AG04449 (cell line): ENCODE measurements at regions of chr13 and their contacts with region 1.

Region 1: DNA sequence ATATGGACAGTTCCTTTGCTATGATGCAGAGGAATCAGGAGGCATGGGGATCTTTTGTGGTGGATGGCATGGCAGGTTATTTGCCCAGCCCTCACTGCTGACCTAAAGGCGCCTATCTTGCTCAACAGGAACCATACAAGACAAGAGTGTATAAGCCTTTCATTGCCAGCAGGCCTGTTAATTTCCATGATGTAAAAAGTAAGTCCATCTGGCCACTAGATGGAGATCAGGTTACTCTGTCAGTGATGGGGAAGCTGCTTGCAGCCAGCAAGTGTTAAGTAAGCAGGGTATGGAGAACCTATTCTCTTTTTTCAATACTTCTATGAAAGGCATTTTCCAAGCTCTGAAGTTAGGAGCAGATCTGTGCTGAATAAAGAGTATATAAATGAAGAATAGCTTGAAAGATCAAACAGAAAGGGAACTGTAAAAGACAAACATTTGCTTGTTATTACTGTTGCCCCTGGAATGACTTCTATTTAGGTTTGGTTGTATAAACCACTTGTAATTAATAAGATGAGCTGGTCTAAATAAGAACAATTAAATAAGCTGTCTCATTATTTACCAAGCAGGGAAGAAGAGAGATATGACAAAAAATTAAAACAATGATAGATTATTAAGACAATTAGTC is 210.9 kb downstream of the RGCC start:
- DNase-seq: peak; percentile 81
- H3K4me3 ChIP-seq: no peak overlapping the region
- CTCF ChIP-seq: peak; percentile 72

Region 2: DNA sequence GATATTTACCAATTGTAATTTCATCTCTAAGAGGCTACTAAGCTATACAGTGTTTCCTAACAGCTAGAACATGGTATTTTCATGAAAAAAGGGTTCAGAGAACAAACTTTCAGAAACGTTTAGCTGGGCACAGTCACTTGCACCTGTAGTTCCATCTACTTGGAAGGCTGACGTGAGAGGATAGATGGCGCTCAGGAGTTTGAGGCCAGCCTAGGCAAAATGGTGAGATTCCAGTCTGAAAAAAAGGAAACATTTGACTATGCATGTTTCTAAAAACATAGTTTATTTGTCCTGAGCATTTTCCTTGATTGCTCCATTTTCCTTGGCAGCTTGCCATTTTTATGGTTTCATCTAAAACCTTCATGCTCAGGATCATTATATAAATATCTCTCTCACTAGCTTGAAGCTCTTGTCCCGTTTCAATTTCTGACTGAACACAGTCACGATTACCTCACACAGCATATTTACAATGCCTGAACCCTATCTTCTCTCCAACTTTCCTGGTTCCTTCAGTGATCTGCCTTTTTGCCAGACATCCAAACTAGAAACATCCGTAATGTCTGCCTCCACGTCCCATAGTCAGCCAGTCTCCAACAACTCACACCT is 10.1 kb before region 1 on chr13:
- CTCF ChIA-PET with region 1: interaction called, 55 read pairs
- POLR2A ChIA-PET with region 1: no interaction called
- DNase-seq: no peak
- H3K4me3 ChIP-seq: no peak overlapping the region
- CTCF ChIP-seq: no peak

Region 3: DNA sequence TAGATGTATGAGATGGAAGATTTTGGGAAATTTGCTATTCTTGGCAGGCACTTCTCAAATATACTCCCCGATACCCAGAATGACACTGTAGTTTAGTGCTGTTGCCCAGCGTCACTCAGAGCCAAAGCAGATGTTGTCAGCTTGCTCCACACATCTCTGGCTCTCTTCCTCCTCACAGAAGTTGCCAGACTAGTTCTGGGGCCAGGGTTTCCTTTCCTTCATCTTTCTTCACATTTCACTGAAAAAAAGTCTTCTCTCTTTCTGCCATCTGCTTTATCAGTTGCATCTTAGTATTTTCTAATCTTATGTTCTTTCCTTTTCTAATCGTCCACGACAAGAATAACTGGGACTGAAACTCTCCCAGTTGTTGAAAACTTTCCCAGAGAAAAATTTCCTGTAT is 40.5 kb after region 1 on chr13:
- CTCF ChIA-PET with region 1: no interaction called
- POLR2A ChIA-PET with region 1: no interaction called
- DNase-seq: no peak
- H3K4me3 ChIP-seq: no peak overlapping the region
- CTCF ChIP-seq: no peak

Region 4: DNA sequence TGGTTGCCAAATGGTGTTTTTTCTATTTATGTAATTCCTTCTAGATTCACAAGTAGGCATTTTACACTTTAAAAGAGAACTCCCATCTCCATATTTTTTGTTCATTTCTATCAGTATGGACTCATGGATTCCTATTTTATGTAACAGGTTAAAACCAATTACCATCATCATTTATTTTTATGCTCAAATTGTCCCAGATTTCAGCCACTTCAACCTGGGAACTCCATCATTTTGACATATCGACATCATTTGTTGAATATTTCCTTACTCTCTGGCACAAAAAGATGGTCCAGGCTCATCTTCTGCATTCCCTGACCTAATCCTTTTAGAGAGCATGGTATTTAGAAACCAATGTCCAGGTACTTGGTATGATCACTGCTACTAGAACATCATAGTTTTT is 212.7 kb after region 1 on chr13:
- CTCF ChIA-PET with region 1: interaction called, 10 read pairs
- POLR2A ChIA-PET with region 1: no interaction called
- DNase-seq: no peak
- H3K4me3 ChIP-seq: no peak overlapping the region
- CTCF ChIP-seq: no peak

Region 5: GRCh38 chr13:42041011-42041683 is 372.9 kb after region 1 on chr13:
- CTCF ChIA-PET with region 1: interaction called, 17 read pairs
- POLR2A ChIA-PET with region 1: no interaction called
- DNase-seq: no peak
- H3K4me3 ChIP-seq: peak overlapping the region; percentile 78
- CTCF ChIP-seq: no peak

Region 6: GRCh38 chr13:42110410-42111155 is 442.3 kb after region 1 on chr13:
- CTCF ChIA-PET with region 1: interaction called, 182 read pairs
- POLR2A ChIA-PET with region 1: no interaction called
- DNase-seq: peak; percentile 23
- H3K4me3 ChIP-seq: no peak overlapping the region
- CTCF ChIP-seq: peak; percentile 44

Region 7: DNA sequence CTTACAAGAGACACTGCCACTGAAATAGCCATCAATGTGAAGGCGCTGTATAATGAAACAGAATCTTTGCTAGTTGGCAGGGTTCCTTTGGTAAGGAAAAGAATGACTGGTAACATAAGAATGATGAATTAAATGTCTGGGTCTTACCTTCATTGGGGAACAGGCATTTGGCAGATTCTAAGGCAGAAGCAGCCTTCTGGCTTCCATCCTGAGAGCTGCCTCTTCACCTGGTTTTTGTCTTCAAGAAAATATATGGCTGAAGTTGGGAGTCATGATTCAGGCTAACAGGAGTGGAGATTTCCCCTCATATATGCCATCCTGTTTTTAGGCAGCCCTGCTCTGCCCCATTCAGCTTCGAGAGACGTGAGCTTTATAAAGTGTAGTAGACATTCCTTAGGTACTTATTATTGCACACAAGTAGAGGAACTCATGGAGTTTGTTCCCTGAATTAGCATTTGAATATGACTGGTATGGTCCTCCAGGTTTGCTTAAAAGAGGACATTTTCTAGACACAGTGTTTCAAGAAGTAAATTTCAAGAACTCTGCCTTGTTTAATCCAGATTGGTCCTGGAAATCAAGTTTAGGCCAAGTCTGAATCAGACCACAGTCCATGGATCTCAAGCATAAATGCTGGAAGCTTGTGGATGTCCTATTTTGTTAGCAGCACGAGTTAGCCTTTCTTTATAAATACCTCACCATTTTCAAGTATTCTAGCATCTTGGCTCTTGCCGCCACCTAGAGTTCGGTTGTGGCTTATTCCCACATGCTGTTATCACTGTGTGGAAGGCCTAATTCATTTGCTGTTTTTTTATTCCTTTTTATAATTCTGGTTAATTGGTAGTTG is 547.6 kb after region 1 on chr13:
- CTCF ChIA-PET with region 1: interaction called, 10 read pairs
- POLR2A ChIA-PET with region 1: no interaction called
- DNase-seq: no peak
- H3K4me3 ChIP-seq: no peak overlapping the region
- CTCF ChIP-seq: peak; percentile 58